PC-9 (cell line): ENCODE measurements at regions of chr9 and their contacts with region 1.

Region 1: GRCh38 chr9:35732122-35732799 is at the starts of genes CREB3 and TLN1:
- DNase-seq: peak; percentile 92 to 96
- H3K4me3 ChIP-seq: peak within 1 kb of the TSS; percentile 86
- H3K27ac ChIP-seq: peak within 1 kb of the TSS; percentile 79
- H3K4me1 ChIP-seq: peaks cover 48% of the 10 kb centered on the region
- H3K27me3 ChIP-seq: no peaks in the 10 kb centered on the region
- CTCF ChIP-seq: no peak
- total RNA-seq, gene CREB3: 22.4 and 23.6 TPM in 2 replicates
- total RNA-seq, gene TLN1: 101 and 114 TPM in 2 replicates

Region 2: DNA sequence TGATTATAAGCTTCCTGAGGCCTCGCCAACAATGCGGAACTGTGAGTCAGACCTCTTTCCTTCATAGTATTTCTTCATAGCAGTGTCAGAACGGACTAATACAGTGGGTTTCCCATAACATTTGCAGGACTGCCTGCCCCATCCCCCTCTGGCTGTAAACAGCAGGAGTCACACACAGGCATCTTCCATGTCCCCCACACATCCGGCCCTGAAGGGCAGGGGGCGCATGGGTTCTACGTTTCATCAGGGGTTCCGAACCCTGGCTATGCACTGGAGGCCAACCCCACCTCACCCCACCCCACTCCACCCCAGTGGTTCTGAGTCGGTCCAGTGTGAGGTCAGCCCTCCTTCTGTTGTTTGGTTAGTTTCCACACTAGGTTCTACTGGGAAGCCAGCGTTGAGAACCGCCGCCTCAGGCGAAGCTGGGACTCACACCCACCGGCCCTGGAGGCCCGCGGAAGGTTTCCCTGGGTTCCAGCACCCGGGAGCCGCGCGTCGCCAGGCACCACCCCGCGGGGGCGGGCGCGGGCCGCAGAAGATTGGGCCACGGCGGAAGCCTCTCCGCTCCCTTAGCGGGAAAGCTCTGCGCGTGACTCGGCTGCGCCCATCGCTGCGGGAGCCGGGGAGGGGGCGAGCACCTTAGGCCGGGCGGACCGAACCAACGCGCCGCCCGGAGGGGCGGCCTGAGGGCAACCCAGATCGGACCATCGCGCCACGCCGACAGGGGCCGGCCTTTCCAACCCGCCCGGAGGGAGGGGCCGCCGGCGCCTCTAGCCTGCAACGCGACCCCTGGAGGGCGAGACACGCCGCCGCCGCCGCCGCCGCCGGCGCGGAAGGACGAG is 242.7 kb before region 1 on chr9 and contains the start of gene RUSC2:
- CTCF ChIA-PET with region 1: no interaction called
- POLR2A ChIA-PET with region 1: no interaction called
- intact Hi-C with region 1: loop called (anchors 10 kb)
- DNase-seq: peak; percentile 64 to 82
- H3K4me3 ChIP-seq: peak within 1 kb of the TSS; percentile 76
- H3K27ac ChIP-seq: peak within 1 kb of the TSS; percentile 86
- H3K4me1 ChIP-seq: peaks cover 18% of the 10 kb centered on the region
- H3K27me3 ChIP-seq: no peaks in the 10 kb centered on the region
- CTCF ChIP-seq: peak; percentile 39; the same call in 1 of the 2 replicates
- total RNA-seq, gene RUSC2: 10.1 and 12.5 TPM in 2 replicates

Region 3: GRCh38 chr9:35646533-35647265 is 85.6 kb before region 1 on chr9:
- CTCF ChIA-PET with region 1: no interaction called
- POLR2A ChIA-PET with region 1: interaction called, 3 read pairs
- intact Hi-C with region 1: loop called (anchors 1 kb)
- DNase-seq: peak; percentile 61 to 88
- H3K4me3 ChIP-seq: peak overlapping the region; percentile 71
- H3K27ac ChIP-seq: peak overlapping the region; percentile 66
- H3K4me1 ChIP-seq: peaks cover 5% of the 10 kb centered on the region; the same call in 1 of the 2 replicates
- H3K27me3 ChIP-seq: no peaks in the 10 kb centered on the region
- CTCF ChIP-seq: peak; percentile 73

Region 4: DNA sequence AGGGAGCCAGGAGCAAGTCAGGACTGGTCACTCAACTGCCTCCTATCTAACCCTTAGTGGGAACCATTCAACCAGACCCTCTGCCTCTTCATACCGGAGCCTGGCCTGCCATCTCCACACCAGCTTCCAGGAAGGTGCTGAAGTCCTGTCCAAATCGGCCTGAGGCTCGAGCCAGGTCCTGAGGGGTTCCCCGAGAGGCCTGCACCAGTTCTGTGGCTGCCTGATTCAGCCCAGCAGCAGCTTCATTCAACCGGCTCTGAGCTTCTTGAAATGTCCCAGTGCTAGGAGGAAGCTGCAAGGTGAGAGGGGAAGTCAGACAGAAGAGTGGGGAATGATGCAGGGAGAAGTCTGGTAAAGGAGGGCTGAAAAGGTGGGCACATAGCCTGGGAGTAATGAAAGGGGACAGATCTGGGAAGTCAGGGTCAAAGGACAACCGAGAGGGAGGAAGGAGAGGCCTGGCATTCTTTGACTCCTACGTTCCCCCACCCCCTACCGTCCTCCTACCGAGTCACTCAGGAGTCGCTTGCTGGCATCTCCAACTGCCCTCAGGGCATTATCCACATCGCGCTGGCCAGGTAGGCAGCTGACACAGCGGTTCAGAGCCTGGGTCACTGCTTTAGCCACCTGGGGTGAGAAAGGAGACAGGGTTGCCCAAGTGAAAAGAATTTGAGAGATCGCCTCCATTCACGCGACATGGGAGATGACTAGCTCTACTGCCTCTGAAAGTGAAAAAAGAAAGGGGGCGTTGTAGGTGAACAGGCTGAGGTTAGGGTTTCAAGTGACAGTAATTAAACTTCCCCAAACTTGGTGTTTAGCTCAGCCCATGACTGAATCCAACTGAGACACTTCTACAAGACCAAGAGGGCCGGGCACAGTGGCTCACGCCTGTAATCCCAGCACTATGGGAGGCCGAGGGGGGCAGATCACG is 20.5 kb before region 1 on chr9:
- CTCF ChIA-PET with region 1: interaction called, 4 read pairs
- POLR2A ChIA-PET with region 1: interaction called, 24 read pairs
- intact Hi-C with region 1: no loop called
- DNase-seq: peak; percentile 86 to 92
- H3K4me3 ChIP-seq: no peak overlapping the region
- H3K27ac ChIP-seq: peak overlapping the region; percentile 65
- H3K4me1 ChIP-seq: peaks cover 21% of the 10 kb centered on the region
- H3K27me3 ChIP-seq: no peaks in the 10 kb centered on the region
- CTCF ChIP-seq: no peak; the same call in 1 of the 2 replicates

Region 5: GRCh38 chr9:35882263-35882848 is 150.1 kb after region 1 on chr9:
- CTCF ChIA-PET with region 1: interaction called, 3 read pairs
- POLR2A ChIA-PET with region 1: no interaction called
- intact Hi-C with region 1: loop called (anchors 1 kb)
- DNase-seq: peak; percentile 49 to 70
- H3K4me3 ChIP-seq: no peak overlapping the region
- H3K27ac ChIP-seq: no peak overlapping the region
- H3K4me1 ChIP-seq: no peaks in the 10 kb centered on the region
- H3K27me3 ChIP-seq: no peaks in the 10 kb centered on the region
- CTCF ChIP-seq: peak; percentile 91